BJ (cell line): ENCODE measurements at regions of chr5 and their contacts with region 1.

Region 1: GRCh38 chr5:169980418-169981053 is at the start of gene INSYN2B:
- DNase-seq: peak; percentile 63
- H3K4me3 ChIP-seq: peak within 1 kb of the TSS; percentile 43
- H3K27me3 ChIP-seq: no peaks in the 10 kb centered on the region
- CTCF ChIP-seq: peak; percentile 59
- polyA plus RNA-seq, gene INSYN2B: 2.0 and 2.4 TPM in 2 replicates

Region 2: GRCh38 chr5:169663537-169663936 is 317.0 kb before region 1 on chr5:
- CTCF ChIA-PET with region 1: no interaction called
- POLR2A ChIA-PET with region 1: no interaction called
- DNase-seq: no peak
- H3K4me3 ChIP-seq: no peak overlapping the region
- H3K27me3 ChIP-seq: no peaks in the 10 kb centered on the region
- CTCF ChIP-seq: no peak

Region 3: DNA sequence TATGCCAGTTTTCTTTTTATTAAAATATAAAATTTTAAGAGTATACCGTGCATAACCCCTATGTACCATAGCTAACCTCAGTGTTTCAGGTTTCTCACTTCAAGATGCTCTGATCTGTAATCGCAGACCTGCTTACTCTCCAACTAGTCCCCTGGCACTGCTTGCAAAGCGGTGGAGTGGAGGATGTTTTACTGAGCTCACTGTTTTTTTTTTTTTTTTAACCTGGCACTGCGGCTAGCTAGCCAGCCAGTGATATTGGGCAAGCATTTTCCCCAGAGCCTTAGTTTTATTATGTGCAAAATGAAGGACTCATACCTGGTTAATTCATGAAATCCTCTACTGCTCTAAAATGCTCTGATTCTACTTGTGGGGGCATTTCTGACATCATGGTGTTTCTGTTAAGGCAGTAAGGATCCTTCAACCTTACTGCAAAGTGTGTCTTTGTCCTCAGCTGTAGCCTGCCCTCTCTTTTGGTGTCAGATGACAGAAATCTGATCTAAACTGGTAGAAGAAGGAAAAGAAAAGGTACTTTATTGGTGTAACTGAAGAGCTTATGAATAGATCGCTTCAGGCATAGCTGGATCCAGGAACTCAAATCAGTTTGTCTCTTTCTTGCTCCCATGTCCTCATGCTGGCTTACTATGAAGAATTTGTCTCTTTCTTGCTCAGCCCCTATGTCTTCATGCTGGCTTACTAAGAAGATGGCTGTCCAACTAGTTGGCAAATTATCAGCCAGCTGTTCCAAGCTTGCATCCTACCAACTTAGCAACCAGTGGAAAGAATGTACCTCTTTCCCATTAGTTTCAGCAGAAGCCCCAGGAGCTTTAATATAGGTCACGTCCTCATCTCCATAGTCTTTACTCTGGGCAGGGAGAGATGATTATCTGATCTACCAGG is 283.7 kb before region 1 on chr5:
- CTCF ChIA-PET with region 1: interaction called, 20 read pairs
- POLR2A ChIA-PET with region 1: no interaction called
- DNase-seq: no peak
- H3K4me3 ChIP-seq: no peak overlapping the region
- H3K27me3 ChIP-seq: no peaks in the 10 kb centered on the region
- CTCF ChIP-seq: no peak

Region 4: GRCh38 chr5:169716278-169716677 is 264.3 kb before region 1 on chr5:
- CTCF ChIA-PET with region 1: interaction called, 33 read pairs
- POLR2A ChIA-PET with region 1: no interaction called
- DNase-seq: peak; percentile 35
- H3K4me3 ChIP-seq: no peak overlapping the region
- H3K27me3 ChIP-seq: no peaks in the 10 kb centered on the region
- CTCF ChIP-seq: no peak

Region 5: DNA sequence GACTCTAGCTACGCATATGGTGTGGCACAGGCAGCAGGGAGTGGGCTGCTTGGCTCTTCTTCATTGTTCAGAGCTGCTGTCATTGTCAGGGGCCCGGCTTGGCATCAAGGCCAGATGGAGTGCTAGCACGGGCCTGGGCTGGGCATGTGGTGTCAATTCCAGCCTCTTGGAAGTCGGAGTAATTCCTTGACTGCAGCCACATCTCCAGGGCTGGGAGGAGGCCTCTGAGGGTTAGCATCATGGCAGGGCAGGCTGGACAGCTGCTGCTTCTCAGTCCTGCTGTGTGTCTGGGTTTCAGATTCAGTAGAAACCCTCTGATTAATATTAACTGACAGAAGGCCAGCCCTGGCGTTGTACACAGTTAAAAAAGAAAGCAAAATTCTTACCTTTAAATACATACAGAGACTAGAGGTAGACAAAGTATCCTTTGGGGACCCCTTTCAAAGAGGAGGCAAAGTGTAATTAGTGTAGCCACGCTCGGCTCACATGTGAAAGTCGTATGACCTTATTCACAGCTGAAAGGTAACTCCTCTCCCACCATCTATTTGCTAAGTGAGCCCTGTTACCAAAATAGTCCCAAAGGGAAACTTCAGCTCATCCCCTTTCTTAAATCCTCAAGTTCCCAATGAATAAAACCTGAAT is 217.0 kb before region 1 on chr5:
- CTCF ChIA-PET with region 1: interaction called, 16 read pairs
- POLR2A ChIA-PET with region 1: no interaction called
- DNase-seq: no peak
- H3K4me3 ChIP-seq: no peak overlapping the region
- H3K27me3 ChIP-seq: no peaks in the 10 kb centered on the region
- CTCF ChIP-seq: no peak

Region 6: DNA sequence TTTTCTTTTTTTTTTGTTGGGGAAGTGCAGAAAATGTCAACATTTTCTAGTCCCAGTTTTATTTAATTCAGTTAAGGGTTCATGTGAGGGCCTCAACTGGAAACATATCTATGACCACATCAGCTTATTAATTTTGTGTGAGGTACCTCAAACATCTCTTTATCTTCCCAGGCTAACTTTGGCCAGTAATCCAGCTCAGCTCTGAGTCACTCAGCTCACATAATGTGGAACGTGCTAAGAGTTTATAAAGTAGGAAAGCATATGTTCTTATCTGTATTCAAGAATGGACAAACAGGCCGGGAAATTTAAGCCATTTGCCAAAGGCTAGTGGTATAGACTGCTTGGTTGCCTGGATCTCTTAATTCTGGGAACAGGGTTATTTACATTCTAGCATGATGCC is 118.6 kb before region 1 on chr5:
- CTCF ChIA-PET with region 1: interaction called, 15 read pairs
- POLR2A ChIA-PET with region 1: no interaction called
- DNase-seq: peak; percentile 82
- H3K4me3 ChIP-seq: no peak overlapping the region
- H3K27me3 ChIP-seq: no peaks in the 10 kb centered on the region
- CTCF ChIP-seq: no peak

Region 7: GRCh38 chr5:169923988-169924387 is 56.5 kb before region 1 on chr5:
- CTCF ChIA-PET with region 1: interaction called, 11 read pairs
- POLR2A ChIA-PET with region 1: no interaction called
- DNase-seq: no peak
- H3K4me3 ChIP-seq: no peak overlapping the region
- H3K27me3 ChIP-seq: no peaks in the 10 kb centered on the region
- CTCF ChIP-seq: no peak

Region 8: GRCh38 chr5:169964246-169964645 is 16.3 kb before region 1 on chr5:
- CTCF ChIA-PET with region 1: interaction called, 33 read pairs
- POLR2A ChIA-PET with region 1: no interaction called
- DNase-seq: no peak
- H3K4me3 ChIP-seq: no peak overlapping the region
- H3K27me3 ChIP-seq: no peaks in the 10 kb centered on the region
- CTCF ChIP-seq: no peak